Upper lobe of right lung (tissue), 1 donor: ENCODE measurements at regions of chr12 and their contacts with region 1.

Region 1: GRCh38 chr12:111741235-111741812 is 25.4 kb upstream of the ALDH2 start:
- DNase-seq: no peak
- ATAC-seq: peak; percentile 12
- H3K4me3 ChIP-seq: no peak overlapping the region
- H3K27ac ChIP-seq: peak overlapping the region; percentile 25
- H3K4me1 ChIP-seq: peaks cover 12% of the 10 kb centered on the region
- H3K27me3 ChIP-seq: no peaks in the 10 kb centered on the region
- CTCF ChIP-seq: no peak

Region 2: DNA sequence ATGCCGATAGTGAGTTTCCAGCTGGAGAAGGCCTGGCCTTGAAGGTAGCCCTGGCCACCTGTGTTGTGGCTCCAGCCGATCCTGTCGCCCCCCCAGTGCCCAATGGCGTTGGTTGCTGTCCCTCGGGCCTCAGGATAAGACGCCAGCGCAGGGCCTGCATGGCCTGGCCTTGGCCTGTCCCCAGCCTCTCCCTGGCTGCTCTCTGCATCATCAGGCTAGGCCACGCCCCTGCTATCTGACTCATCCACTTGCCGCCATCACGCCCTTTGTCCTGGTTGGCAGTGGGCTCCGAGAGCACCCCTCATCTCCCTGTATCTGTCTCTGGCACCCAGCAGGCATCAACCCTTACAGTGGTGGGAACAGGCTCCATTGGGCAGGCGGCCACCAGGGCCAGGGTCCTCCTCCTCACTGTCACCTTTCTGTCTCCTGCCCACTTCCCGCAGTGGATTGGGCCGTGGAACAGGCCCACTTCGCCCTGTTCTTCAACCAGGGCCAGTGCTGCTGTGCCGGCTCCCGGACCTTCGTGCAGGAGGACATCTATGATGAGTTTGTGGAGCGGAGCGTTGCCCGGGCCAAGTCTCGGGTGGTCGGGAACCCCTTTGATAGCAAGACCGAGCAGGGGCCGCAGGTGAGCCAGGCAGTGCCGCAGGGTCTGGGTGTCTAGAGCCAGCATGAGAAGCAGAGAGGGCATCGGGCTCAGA is 51.0 kb after region 1 on chr12:
- intact Hi-C with region 1: loop called (anchors 10 kb)
- DNase-seq: peak; percentile 64
- ATAC-seq: peak; percentile 56
- H3K4me3 ChIP-seq: no peak overlapping the region
- H3K27ac ChIP-seq: peak overlapping the region; percentile 42
- H3K4me1 ChIP-seq: peaks cover 10% of the 10 kb centered on the region
- H3K27me3 ChIP-seq: no peaks in the 10 kb centered on the region
- CTCF ChIP-seq: no peak

Region 3: GRCh38 chr12:111881716-111882115 is 140.4 kb after region 1 on chr12:
- intact Hi-C with region 1: no loop called
- DNase-seq: no peak
- ATAC-seq: no peak
- H3K4me3 ChIP-seq: no peak overlapping the region
- H3K27ac ChIP-seq: no peak overlapping the region
- H3K4me1 ChIP-seq: no peaks in the 10 kb centered on the region
- H3K27me3 ChIP-seq: no peaks in the 10 kb centered on the region
- CTCF ChIP-seq: no peak

Region 4: GRCh38 chr12:112161711-112162110 is 420.4 kb after region 1 on chr12:
- intact Hi-C with region 1: no loop called
- DNase-seq: peak; percentile 36
- ATAC-seq: no peak
- H3K4me3 ChIP-seq: no peak overlapping the region
- H3K27ac ChIP-seq: no peak overlapping the region
- H3K4me1 ChIP-seq: no peaks in the 10 kb centered on the region
- H3K27me3 ChIP-seq: no peaks in the 10 kb centered on the region
- CTCF ChIP-seq: no peak